ENCODE measurements at regions of chr1 and their contacts with region 1.

Region 1: GRCh38 chr1:208184088-208184911 is 59.9 kb downstream of the PLXNA2 start:
- DNase-seq: peak; percentile 99
- ATAC-seq: peak; percentile 92
- H3K4me3 ChIP-seq: peak overlapping the region; percentile 29; the same call in 1 of the 2 replicates
- H3K27ac ChIP-seq: peak overlapping the region; percentile 91
- H3K4me1 ChIP-seq: peaks cover 82% of the 10 kb centered on the region
- H3K27me3 ChIP-seq: no peaks in the 10 kb centered on the region
- CTCF ChIP-seq: no peak

Region 2: DNA sequence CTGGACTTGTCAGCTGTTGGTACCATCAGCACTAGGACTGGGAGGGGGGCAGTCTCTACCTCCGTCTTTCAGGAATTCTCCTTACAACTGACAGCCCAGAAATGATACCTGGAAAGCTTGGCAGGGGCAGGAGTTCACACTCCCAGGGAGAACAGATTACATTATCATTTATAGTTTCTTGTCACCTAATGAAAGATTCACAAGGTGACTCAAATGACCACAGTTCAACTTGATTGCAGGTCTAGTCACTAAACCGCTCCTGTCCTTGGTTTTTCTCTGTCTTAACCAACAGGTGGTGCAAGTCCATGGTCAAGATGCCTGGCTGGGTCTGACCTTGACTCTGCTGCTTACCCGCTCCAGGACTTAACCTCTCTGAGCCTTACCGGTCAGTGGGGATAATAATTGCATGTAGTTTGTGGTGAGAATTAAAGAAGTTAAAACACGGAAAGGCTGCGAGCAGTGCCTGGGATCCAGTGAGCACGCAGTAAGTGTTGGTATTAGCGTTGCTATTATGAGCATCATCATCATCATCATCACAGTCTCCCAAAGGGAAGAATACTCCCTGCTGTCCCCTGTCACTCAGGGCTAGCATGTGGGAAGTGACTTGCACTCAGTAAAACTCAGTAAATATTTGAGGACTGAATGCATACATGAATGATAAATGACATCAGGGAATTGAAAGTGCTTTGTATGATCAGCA is 148.0 kb before region 1 on chr1:
- CTCF ChIA-PET with region 1: interaction called, 4 read pairs
- POLR2A ChIA-PET with region 1: no interaction called
- intact Hi-C with region 1: loop called (anchors 2 kb)
- DNase-seq: peak; percentile 68
- ATAC-seq: peak; percentile 89
- H3K4me3 ChIP-seq: no peak overlapping the region
- H3K27ac ChIP-seq: no peak overlapping the region
- H3K4me1 ChIP-seq: no peaks in the 10 kb centered on the region
- H3K27me3 ChIP-seq: no peaks in the 10 kb centered on the region
- CTCF ChIP-seq: peak; percentile 68

Region 3: DNA sequence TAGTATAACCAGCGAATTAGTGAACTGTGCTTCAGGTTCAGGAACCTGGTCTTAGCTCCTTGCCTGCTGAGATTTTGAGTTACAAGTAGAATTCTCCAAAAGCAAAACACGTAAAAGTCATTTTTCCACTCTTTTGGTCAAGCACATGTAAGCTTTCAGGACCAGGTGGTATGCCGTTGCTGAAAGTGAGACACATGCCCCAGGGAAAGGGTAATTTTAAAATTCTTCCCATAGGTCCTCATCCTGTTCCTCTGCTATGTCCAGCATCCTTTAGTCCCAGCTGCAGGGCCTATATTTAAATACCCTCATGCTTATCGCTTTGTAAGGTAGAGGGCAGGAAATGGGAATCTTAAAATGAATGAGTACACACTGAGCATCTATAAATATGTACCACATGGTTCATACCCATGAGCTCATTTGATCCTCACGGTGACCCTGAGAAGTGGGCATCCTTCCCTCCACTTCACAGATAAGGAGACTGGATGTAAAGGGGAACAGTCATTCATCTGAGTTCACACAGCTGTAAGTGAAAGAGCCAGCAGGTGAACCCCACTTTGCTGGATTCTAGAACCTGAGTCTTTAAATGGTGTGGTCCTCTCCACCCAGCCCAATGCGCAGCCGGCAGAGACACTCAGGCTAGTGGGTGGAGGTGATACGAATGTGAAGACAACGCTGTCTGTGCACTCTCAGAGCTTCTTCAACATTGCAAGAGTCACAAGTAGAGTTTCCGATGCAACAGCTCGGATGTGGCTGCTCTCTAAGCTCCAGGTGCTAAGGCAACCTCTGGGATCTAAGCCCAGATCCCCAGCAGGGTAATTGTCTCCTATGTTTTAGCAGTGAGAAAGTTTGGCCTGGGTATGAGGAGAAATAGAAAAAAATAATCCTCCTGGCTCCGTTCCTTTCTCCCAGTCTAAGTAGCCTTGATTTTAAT is 103.7 kb before region 1 on chr1:
- CTCF ChIA-PET with region 1: no interaction called
- POLR2A ChIA-PET with region 1: interaction called, 31 read pairs
- intact Hi-C with region 1: no loop called
- DNase-seq: no peak
- ATAC-seq: no peak
- H3K4me3 ChIP-seq: no peak overlapping the region
- H3K27ac ChIP-seq: no peak overlapping the region
- H3K4me1 ChIP-seq: no peaks in the 10 kb centered on the region
- H3K27me3 ChIP-seq: no peaks in the 10 kb centered on the region
- CTCF ChIP-seq: no peak

Region 4: GRCh38 chr1:208132287-208132883 is 51.9 kb before region 1 on chr1:
- CTCF ChIA-PET with region 1: interaction called, 4 read pairs
- POLR2A ChIA-PET with region 1: no interaction called
- intact Hi-C with region 1: loop called (anchors 1 kb)
- DNase-seq: peak; percentile 93
- ATAC-seq: peak; percentile 100
- H3K4me3 ChIP-seq: peak overlapping the region; percentile 2; the same call in 1 of the 2 replicates
- H3K27ac ChIP-seq: peak overlapping the region; percentile 46
- H3K4me1 ChIP-seq: peaks cover 16% of the 10 kb centered on the region
- H3K27me3 ChIP-seq: no peaks in the 10 kb centered on the region
- CTCF ChIP-seq: peak; percentile 99

Region 5: DNA sequence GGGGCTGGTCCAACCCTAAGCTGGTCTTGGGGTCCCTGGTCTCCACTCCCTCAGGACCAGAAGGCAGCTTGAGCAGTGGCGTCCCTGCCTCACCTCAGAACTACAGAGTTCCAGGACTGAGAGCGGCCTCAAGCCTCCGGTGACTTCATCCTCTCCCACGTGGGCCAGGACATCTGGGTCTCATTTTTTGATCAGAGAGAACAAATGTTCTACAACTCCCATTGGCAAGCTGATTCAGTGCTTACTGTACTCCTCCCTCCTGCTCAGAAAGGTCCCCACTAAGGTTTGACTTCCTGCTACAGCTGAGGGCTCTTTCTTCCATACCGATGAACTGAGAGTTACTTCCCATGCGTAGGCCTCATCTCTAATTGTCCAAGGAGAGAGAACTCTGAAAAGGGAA is 18.6 kb before region 1 on chr1:
- CTCF ChIA-PET with region 1: no interaction called
- POLR2A ChIA-PET with region 1: no interaction called
- intact Hi-C with region 1: no loop called
- DNase-seq: no peak
- ATAC-seq: no peak
- H3K4me3 ChIP-seq: no peak overlapping the region
- H3K27ac ChIP-seq: no peak overlapping the region
- H3K4me1 ChIP-seq: no peaks in the 10 kb centered on the region
- H3K27me3 ChIP-seq: no peaks in the 10 kb centered on the region
- CTCF ChIP-seq: no peak

Region 6: DNA sequence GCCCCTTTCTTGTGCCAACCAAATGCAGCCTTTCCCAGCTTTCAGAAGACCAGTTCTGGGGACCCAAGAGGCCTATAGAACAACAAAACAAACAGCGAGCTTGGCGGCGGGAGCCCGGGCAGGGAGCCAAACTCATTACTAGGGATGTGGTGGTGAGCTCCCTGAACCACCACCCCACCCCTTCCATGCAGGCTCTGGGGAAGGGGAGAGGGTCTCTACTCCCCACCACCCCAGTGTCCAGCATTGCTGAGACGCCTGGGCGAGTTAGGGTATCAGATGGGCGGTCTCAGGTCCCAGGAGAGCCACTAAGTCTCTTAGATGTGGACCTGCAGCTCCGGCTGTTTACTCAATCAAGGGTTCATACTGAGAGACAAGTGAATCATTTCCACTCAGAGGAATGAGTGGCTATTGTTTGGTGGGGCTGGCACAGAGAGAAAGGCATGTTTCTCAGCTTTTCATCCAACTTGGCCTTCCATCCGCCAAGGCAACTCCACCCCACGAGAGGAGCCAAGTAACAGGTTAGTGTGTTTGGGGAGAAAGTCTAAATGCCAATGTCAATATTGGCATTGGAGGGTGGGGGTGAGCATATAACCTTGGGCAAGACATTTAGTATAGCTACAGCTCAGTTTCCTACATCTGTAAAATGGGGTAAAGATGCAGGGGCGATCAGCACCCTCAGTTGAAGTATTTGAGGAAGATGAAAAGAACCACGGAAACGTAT is 19.0 kb after region 1 on chr1:
- CTCF ChIA-PET with region 1: interaction called, 3 read pairs
- POLR2A ChIA-PET with region 1: interaction called, 14 read pairs
- intact Hi-C with region 1: loop called (anchors 1 kb)
- DNase-seq: peak; percentile 98
- ATAC-seq: peak; percentile 80
- H3K4me3 ChIP-seq: peak overlapping the region; percentile 49
- H3K27ac ChIP-seq: peak overlapping the region; percentile 91
- H3K4me1 ChIP-seq: peaks cover 49% of the 10 kb centered on the region
- H3K27me3 ChIP-seq: no peaks in the 10 kb centered on the region
- CTCF ChIP-seq: no peak

Region 7: DNA sequence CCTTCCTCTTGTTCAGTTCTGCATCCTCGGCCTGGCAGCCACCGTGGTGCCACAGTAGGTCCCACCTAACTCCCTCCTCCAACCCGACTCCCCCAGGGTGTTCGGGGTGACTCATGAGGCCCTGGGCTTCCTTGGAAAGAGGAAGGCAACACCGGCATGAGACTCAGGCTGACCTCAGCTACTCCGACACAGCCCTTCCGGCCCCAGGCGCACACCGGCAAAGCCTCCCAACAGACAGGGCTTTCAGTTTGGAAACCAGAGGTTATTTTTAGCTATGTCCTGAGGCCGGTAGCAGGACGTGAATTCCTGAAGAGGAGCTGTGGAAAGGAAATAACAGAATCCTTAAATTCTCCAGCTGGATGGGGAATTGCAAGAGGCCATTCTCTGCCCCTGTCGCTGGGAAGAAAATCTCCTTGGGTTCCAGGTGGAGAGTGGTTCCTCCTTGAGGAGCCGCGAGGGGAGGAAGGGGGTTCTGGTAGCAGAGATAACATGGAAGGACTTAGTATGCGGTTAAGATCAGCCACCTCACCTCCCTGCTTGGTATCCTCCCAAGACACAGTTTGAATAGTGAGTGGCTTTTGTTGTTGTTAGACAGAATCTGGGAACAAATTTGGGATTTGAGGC is 35.5 kb after region 1 on chr1:
- CTCF ChIA-PET with region 1: no interaction called
- POLR2A ChIA-PET with region 1: no interaction called
- intact Hi-C with region 1: loop called (anchors 1 kb)
- DNase-seq: peak; percentile 92
- ATAC-seq: peak; percentile 90
- H3K4me3 ChIP-seq: peak overlapping the region; percentile 48
- H3K27ac ChIP-seq: peak overlapping the region; percentile 89
- H3K4me1 ChIP-seq: peaks cover 55% of the 10 kb centered on the region
- H3K27me3 ChIP-seq: no peaks in the 10 kb centered on the region
- CTCF ChIP-seq: no peak

Region 8: GRCh38 chr1:208279826-208280588 is 95.7 kb after region 1 on chr1:
- CTCF ChIA-PET with region 1: no interaction called
- POLR2A ChIA-PET with region 1: no interaction called
- intact Hi-C with region 1: no loop called
- DNase-seq: no peak
- ATAC-seq: no peak
- H3K4me3 ChIP-seq: no peak overlapping the region
- H3K27ac ChIP-seq: no peak overlapping the region
- H3K4me1 ChIP-seq: no peaks in the 10 kb centered on the region
- H3K27me3 ChIP-seq: peaks cover 76% of the 10 kb centered on the region
- CTCF ChIP-seq: no peak